Endothelial cell of umbilical vein (primary cell): ENCODE measurements at regions of chr11 and their contacts with region 1.

Region 1: GRCh38 chr11:126480410-126481302 is 125.2 kb downstream of the ST3GAL4 start:
- DNase-seq: peak; percentile 76
- H3K4me3 ChIP-seq: no peak overlapping the region
- H3K27ac ChIP-seq: no peak overlapping the region
- H3K4me1 ChIP-seq: no peaks in the 10 kb centered on the region
- H3K27me3 ChIP-seq: peaks cover 0 to 2% of the 10 kb centered on the region in 2 experiments
- CTCF ChIP-seq: peak; percentile 87 to 95
- POLR2A ChIP-seq: no peak

Region 2: DNA sequence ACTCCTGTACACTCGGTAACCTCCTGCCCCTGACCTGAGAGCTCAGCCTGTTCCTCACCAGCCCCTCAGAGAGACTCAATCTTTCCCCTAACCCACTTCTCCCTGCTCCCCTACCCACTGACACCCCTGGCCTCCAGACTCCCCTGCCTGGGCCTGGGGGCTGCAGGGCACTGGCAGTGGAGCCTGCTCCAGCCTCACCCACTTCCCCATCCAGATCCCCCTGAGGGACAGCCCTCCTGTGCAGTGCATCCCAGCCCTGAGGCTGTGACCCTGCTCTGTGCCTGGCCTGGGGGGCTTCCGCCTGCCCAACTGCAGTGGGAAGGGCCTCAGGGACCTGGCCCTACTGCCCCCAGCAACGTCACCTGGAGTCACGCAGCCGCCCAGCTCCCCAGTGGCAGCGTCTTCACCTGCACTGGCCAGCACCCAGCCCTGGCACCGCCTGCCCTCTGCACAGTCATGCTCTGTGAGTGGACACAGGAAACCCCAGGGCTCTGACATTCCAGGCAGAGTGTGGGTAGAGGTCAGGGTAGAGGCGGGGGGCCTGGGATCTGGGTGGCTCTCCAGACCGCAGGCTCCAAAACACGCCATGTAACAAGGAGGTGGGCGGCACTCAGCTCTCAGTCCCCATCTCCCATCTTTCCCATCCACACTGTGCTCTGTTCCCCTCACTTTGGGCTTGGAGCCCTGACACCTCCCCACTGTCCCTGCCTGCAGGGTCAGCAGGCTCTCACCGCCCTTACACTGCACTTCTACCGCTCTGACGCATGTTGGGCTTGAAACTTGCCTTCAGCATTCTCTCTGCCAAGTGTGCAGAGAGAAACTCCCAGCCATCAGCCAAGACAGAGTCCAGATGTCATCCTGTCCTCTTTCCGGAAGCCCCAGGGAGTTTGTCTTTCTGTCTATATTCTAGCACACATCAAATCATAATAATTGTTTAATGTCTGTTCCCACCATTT is 529.7 kb before region 1 on chr11:
- CTCF ChIA-PET with region 1: no interaction called
- POLR2A ChIA-PET with region 1: no interaction called
- dilution Hi-C with region 1: no loop called
- intact Hi-C with region 1: no loop called
- DNase-seq: no peak
- H3K4me3 ChIP-seq: no peak overlapping the region
- H3K27ac ChIP-seq: no peak overlapping the region
- H3K4me1 ChIP-seq: no peaks in the 10 kb centered on the region
- H3K27me3 ChIP-seq: no peaks in the 10 kb centered on the region
- CTCF ChIP-seq: no peak
- POLR2A ChIP-seq: no peak

Region 3: GRCh38 chr11:126318574-126319373 is 161.9 kb before region 1 on chr11:
- CTCF ChIA-PET with region 1: interaction called, 437 read pairs
- POLR2A ChIA-PET with region 1: no interaction called
- dilution Hi-C with region 1: no loop called
- intact Hi-C with region 1: no loop called
- DNase-seq: no peak
- H3K4me3 ChIP-seq: no peak overlapping the region
- H3K27ac ChIP-seq: no peak overlapping the region
- H3K4me1 ChIP-seq: no peaks in the 10 kb centered on the region
- H3K27me3 ChIP-seq: no peaks in the 10 kb centered on the region
- CTCF ChIP-seq: no peak
- POLR2A ChIP-seq: no peak

Region 4: DNA sequence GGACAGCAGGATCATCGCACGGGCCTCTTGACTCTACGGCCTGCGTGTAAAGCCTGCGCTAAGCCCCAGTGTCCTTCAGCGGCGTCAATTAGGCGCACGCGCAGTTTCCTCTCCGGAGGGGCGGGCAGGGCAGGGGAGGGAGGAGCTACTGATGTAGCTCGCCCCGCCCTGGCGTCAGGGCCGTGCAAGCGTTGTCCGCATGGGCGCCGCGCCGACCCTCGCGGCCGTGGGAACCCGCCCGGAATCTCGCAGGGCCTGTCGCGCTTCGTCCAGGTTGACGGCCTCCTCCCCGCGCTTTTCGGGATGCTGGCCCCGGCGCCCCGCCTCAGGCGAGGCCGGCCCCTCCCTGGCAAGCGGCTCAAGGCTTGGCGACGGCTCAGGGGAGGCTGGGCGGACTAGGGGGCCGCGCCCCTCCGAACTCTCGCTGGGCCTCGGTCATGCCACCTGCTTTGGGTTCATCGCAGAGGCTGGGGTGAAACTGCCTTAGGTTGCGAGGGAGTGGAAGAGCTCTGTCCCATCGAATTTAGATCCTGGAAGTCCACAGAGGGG is 64.0 kb before region 1 on chr11:
- CTCF ChIA-PET with region 1: interaction called, 21 read pairs
- POLR2A ChIA-PET with region 1: no interaction called
- dilution Hi-C with region 1: no loop called
- intact Hi-C with region 1: no loop called
- DNase-seq: peak; percentile 91
- H3K4me3 ChIP-seq: peak overlapping the region; percentile 44 to 47 (median 44)
- H3K27ac ChIP-seq: peak overlapping the region; percentile 57
- H3K4me1 ChIP-seq: peaks cover 11% of the 10 kb centered on the region
- H3K27me3 ChIP-seq: no peaks in the 10 kb centered on the region
- CTCF ChIP-seq: no peak
- POLR2A ChIP-seq: peak; percentile 76

Region 5: DNA sequence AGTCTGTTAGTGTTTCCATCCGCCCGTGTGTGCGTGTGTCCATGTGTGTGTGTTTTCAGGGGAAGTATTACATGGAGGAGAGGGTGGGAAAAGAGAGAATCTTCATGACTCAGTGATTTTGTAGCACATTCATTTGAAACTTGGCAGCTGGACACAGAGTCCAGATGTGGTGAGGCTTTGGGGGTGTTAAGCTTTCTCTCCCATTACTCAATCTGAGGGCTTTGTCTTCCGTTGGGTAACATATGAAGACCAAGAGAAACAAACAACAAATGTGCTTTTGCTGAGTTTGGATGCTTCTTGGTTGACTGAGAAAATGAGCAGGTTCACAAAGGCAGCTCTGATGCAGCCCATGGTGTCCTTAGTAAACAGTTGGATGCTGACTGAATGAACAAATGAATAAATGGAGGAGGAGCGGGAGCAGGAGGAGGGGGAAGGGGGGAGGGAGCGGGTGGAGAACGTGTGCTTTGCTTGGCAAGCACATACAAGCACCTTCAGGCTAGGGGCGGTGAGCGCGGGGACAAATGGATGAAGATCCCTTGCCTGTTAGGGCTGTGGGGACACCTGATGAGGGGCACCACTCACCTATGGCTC is 20.9 kb before region 1 on chr11:
- CTCF ChIA-PET with region 1: interaction called, 17 read pairs
- POLR2A ChIA-PET with region 1: no interaction called
- dilution Hi-C with region 1: no loop called
- intact Hi-C with region 1: no loop called
- DNase-seq: no peak
- H3K4me3 ChIP-seq: no peak overlapping the region
- H3K27ac ChIP-seq: no peak overlapping the region
- H3K4me1 ChIP-seq: no peaks in the 10 kb centered on the region
- H3K27me3 ChIP-seq: no peaks in the 10 kb centered on the region
- CTCF ChIP-seq: no peak
- POLR2A ChIP-seq: no peak

Region 6: GRCh38 chr11:126585781-126586491 is 105.3 kb after region 1 on chr11:
- CTCF ChIA-PET with region 1: interaction called, 17 read pairs
- POLR2A ChIA-PET with region 1: no interaction called
- dilution Hi-C with region 1: no loop called
- intact Hi-C with region 1: no loop called
- DNase-seq: peak; percentile 99
- H3K4me3 ChIP-seq: peak overlapping the region in 1 of 3 experiments; percentile 28
- H3K27ac ChIP-seq: peak overlapping the region; percentile 82
- H3K4me1 ChIP-seq: peaks cover 11% of the 10 kb centered on the region
- H3K27me3 ChIP-seq: no peaks in the 10 kb centered on the region
- CTCF ChIP-seq: no peak
- POLR2A ChIP-seq: no peak